Head of caudate nucleus (tissue), 42 donors: ENCODE measurements at regions of chr19 and their contacts with region 1.

Region 1: DNA sequence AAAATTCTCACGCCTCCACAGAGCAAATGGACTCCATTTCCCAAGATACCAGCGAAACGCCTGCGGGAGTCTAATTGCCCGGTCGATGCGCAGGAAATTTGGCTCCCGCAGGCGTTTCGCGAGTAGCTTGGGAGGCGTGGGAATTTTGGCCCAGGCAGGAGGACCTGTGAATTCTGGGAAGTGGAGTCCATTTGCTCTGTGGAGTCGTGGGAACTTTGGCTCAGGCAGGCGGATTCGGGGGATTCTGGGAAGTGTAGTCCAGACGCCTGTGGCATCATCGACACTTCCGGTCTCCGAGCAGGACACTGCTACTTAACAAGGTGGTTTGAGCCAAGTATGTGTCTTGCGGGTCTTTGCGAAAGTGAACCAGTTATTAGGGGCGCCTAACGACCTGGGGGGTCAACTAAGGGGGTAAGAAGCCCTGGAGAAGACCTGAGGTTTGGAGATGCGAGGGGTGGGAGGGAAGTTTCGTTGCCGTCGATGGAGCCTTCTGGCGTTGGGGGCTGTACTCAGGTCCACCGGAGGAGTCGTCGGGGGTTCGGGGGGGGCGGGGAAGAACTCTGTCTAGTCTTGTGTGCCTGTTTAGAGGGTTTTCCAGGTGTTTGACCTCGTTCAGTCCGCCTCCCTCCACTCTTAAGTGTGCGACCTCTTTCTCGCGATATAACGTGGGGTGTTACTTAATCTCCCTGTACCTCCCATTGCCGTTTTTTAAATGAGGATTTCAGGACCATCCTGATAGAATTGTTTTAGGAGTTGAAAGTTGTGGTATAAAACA is at the start of gene ZNF155:
- DNase-seq: peak; percentile 76 to 98 (median 95)

Region 2: GRCh38 chr19:43934985-43935708 is 49.0 kb before region 1 on chr19 and contains the start of gene ZNF45:
- intact Hi-C with region 1: loop called (anchors 10 kb)
- DNase-seq: peak; percentile 88 to 98 (median 94)

Region 3: DNA sequence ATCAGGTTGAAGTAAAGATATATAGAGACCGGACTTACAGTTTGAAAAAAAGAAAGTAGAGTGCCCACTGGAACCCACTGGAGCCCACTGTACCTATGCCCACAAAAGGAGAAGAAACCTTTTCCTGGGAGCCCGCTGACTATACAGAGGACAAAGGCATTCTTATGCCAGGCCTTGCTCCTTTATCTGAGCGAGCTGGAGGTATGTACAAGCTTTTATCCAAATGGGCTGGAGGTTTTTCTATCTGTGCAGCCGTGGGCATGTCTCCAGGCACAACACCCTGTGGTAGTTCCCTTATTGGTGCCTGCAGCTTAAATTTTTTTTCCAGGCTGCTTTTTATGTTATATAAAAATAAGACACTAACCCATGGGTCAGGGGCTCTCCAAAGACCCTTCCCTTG is 165.7 kb after region 1 on chr19:
- intact Hi-C with region 1: no loop called
- DNase-seq: no peak